A673 (cell line): ENCODE measurements at regions of chrX and their contacts with region 1.

Region 1: DNA sequence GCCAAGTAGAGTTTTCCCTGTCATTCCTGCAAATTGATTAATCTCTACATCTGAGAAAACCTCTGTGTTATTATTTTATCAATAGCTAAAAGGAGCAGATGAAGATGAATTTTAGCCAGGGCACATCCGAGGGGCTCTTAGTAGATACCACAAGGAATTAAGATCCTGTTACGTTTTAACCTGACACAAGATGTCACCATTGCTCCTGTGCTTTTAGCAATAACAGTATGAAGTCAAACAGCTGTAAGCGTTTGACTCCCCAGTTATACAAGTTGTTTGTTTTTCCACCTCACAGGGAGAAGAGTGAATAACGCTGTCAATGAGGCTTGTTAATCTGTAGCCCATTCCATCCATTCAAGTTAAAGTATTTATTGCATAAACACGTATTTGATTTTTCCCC is 76.0 kb upstream of the AP1S2 start:
- DNase-seq: peak; percentile 71
- H3K4me3 ChIP-seq: no peak overlapping the region
- H3K27ac ChIP-seq: no peak overlapping the region
- H3K4me1 ChIP-seq: no peaks in the 10 kb centered on the region
- H3K27me3 ChIP-seq: peaks cover 39% of the 10 kb centered on the region
- CTCF ChIP-seq: peak; percentile 56

Region 2: GRCh38 chrX:15761564-15762191 is 168.9 kb before region 1 on chrX:
- CTCF ChIA-PET with region 1: no interaction called
- POLR2A ChIA-PET with region 1: no interaction called
- intact Hi-C with region 1: loop called (anchors 5 kb)
- DNase-seq: peak; percentile 69
- H3K4me3 ChIP-seq: no peak overlapping the region
- H3K27ac ChIP-seq: no peak overlapping the region
- H3K4me1 ChIP-seq: peaks cover 3% of the 10 kb centered on the region
- H3K27me3 ChIP-seq: no peaks in the 10 kb centered on the region
- CTCF ChIP-seq: peak; percentile 85

Region 3: GRCh38 chrX:15977644-15978043 is 47.1 kb after region 1 on chrX:
- CTCF ChIA-PET with region 1: no interaction called
- POLR2A ChIA-PET with region 1: no interaction called
- intact Hi-C with region 1: no loop called
- DNase-seq: peak; percentile 34
- H3K4me3 ChIP-seq: no peak overlapping the region
- H3K27ac ChIP-seq: no peak overlapping the region
- H3K4me1 ChIP-seq: no peaks in the 10 kb centered on the region
- H3K27me3 ChIP-seq: no peaks in the 10 kb centered on the region
- CTCF ChIP-seq: no peak

Region 4: DNA sequence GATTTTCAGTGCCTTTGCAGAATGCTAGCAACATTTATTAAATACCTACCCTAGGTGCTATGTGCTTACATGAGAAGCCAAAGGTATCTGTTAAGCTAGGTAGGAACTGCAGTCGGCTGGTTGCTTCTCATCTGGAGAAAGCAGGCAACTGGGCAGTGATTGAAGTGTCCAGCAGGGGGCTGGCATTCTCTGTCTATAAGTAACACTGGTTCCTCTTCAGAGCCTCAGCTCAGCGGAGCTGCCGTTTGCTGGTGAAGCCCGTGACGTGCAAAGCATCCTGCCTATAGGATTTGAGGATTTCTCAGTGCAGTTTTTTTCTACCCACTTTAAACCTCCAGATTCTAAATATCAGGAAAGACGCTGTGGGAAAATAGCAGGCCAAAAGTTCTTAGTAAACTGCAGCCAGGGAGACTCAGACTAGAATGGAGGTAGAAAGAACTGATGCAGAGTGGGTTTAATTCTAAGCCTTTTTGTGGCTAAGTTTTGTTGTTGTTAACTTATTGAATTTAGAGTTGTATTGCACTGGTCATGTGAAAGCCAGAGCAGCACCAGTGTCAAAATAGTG is 192.7 kb after region 1 on chrX and contains the start of gene GRPR:
- CTCF ChIA-PET with region 1: interaction called, 4 read pairs
- POLR2A ChIA-PET with region 1: no interaction called
- intact Hi-C with region 1: loop called (anchors 5 kb)
- DNase-seq: peak; percentile 91
- H3K4me3 ChIP-seq: no peak within 1 kb of the TSS
- H3K27ac ChIP-seq: no peak within 1 kb of the TSS
- H3K4me1 ChIP-seq: peaks cover 3% of the 10 kb centered on the region
- H3K27me3 ChIP-seq: peaks cover 24% of the 10 kb centered on the region
- CTCF ChIP-seq: peak; percentile 88
- total RNA-seq, gene GRPR: 0.52 and 1.2 TPM in 2 replicates

Region 5: GRCh38 chrX:16212436-16212835 is 281.9 kb after region 1 on chrX:
- CTCF ChIA-PET with region 1: interaction called, 6 read pairs
- POLR2A ChIA-PET with region 1: no interaction called
- intact Hi-C with region 1: loop called (anchors 1 kb)
- DNase-seq: peak; percentile 57
- H3K4me3 ChIP-seq: no peak overlapping the region
- H3K27ac ChIP-seq: no peak overlapping the region
- H3K4me1 ChIP-seq: no peaks in the 10 kb centered on the region
- H3K27me3 ChIP-seq: no peaks in the 10 kb centered on the region
- CTCF ChIP-seq: peak; percentile 64

Region 6: GRCh38 chrX:16445166-16445752 is 514.7 kb after region 1 on chrX:
- CTCF ChIA-PET with region 1: interaction called, 6 read pairs
- POLR2A ChIA-PET with region 1: no interaction called
- intact Hi-C with region 1: loop called (anchors 5 kb)
- DNase-seq: peak; percentile 63
- H3K4me3 ChIP-seq: no peak overlapping the region
- H3K27ac ChIP-seq: no peak overlapping the region
- H3K4me1 ChIP-seq: no peaks in the 10 kb centered on the region
- H3K27me3 ChIP-seq: peaks cover 3% of the 10 kb centered on the region
- CTCF ChIP-seq: peak; percentile 82

Region 7: GRCh38 chrX:16670998-16671397 is 740.4 kb after region 1 on chrX:
- CTCF ChIA-PET with region 1: interaction called, 3 read pairs
- POLR2A ChIA-PET with region 1: no interaction called
- intact Hi-C with region 1: loop called (anchors 10 kb)
- DNase-seq: peak; percentile 75
- H3K4me3 ChIP-seq: no peak overlapping the region
- H3K27ac ChIP-seq: no peak overlapping the region
- H3K4me1 ChIP-seq: no peaks in the 10 kb centered on the region
- H3K27me3 ChIP-seq: no peaks in the 10 kb centered on the region
- CTCF ChIP-seq: peak; percentile 57